Heart right ventricle (tissue), 16 donors: ENCODE measurements at regions of chr20 and their contacts with region 1.

Region 1: DNA sequence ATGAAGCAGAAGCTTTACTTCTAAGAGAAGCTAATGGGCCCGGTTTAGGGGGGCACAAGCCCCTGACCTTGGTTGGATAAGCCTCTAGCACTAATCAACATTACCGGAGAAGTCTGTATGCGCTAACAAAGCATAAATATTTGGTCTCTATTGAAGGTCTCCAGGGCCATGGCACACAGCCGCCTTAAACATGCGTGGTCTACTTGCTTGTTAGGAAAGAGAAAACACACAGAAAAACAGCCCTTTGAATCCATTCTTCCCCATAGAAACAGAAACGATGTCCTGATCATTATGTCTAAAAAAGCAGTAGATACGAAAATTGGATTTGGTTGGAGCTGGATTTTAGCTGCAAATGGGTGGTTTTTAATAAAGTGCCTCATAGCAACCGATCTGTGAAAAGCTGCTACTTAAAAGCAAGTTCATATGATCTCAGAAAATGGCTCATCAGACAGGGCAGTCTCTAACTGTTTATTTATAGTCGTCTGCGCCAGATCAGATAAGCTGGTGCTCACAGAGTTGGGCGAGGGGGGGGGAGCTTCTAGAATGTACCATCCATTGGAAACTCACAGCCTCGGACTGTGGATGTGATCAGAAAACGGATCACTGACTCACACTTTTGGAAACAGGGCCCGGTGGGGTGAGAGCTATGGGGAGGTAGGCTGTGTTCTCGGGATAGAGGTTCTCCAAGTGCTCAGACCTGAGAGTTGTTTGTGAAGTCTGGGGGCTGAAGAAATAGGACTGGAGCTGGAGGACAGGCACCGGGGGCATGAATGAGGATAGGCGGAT is 35.3 kb upstream of the APCDD1L start:
- DNase-seq: no peak
- ATAC-seq: no peak
- H3K4me3 ChIP-seq: no peak overlapping the region
- H3K27ac ChIP-seq: no peak overlapping the region
- H3K4me1 ChIP-seq: no peaks in the 10 kb centered on the region
- H3K27me3 ChIP-seq: peaks cover 0 to 45% (median 15%) of the 10 kb centered on the region in 7 donors
- CTCF ChIP-seq: no peak

Region 2: GRCh38 chr20:60087563-60088153 is 1537.2 kb after region 1 on chr20:
- intact Hi-C with region 1: loop called in 1 of 10 experiments (anchors 5 kb)
- DNase-seq: peak in 1 of 2 donors; percentile 46
- ATAC-seq: peak in 1 of 8 donors; percentile 20
- H3K4me3 ChIP-seq: peak overlapping the region; percentile 10 to 62 (median 42)
- H3K27ac ChIP-seq: peak overlapping the region in 1 of 10 donors; percentile 67
- H3K4me1 ChIP-seq: peaks cover 0 to 10% (median 0%) of the 10 kb centered on the region in 9 donors
- H3K27me3 ChIP-seq: peaks cover 0 to 42% (median 12%) of the 10 kb centered on the region in 7 donors
- CTCF ChIP-seq: no peak